ENCODE measurements at regions of chr11 and their contacts with region 1.

Region 1: GRCh38 chr11:113167595-113167994 is 146.8 kb upstream of the TTC12 start:
- DNase-seq: peak in 3 of 5 donors; percentile 32 to 58 (median 39)
- ATAC-seq: peak in 2 of 4 donors; percentile 18 to 21
- H3K4me3 ChIP-seq: no peak overlapping the region
- H3K27ac ChIP-seq: no peak overlapping the region
- H3K4me1 ChIP-seq: peaks cover 0 to 20% (median 2%) of the 10 kb centered on the region in 12 donors
- H3K27me3 ChIP-seq: peaks cover 0 to 4% (median 0%) of the 10 kb centered on the region in 9 donors
- CTCF ChIP-seq: no peak
- POLR2A ChIP-seq: no peak

Region 2: DNA sequence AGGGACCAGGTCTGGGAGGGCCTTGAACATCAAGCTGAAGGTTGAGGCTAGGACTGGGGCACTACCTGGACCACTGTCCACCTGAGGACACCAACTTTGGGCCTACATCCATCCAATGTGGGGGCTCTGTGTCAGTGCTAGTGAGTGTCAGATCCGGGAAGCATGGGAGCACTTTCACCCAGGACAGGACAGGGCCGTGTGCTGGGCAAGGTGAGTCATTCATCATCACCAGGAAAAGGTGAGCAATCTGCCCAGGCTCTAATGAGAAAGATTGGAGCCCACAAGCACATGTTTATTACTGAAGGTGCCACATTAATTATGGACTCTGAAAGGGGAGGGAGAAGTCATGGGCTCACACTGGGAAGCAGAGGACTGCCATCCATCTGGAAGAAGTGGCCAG is 347.3 kb after region 1 on chr11:
- intact Hi-C with region 1: loop called in 1 of 10 experiments (anchors 5 kb)
- DNase-seq: no peak
- ATAC-seq: no peak
- H3K4me3 ChIP-seq: no peak overlapping the region
- H3K27ac ChIP-seq: no peak overlapping the region
- H3K4me1 ChIP-seq: no peaks in the 10 kb centered on the region
- H3K27me3 ChIP-seq: peaks cover 0 to 7% (median 0%) of the 10 kb centered on the region in 9 donors
- CTCF ChIP-seq: no peak
- POLR2A ChIP-seq: no peak